Heart left ventricle (tissue), 16 donors: ENCODE measurements at regions of chr5 and their contacts with region 1.

Region 1: DNA sequence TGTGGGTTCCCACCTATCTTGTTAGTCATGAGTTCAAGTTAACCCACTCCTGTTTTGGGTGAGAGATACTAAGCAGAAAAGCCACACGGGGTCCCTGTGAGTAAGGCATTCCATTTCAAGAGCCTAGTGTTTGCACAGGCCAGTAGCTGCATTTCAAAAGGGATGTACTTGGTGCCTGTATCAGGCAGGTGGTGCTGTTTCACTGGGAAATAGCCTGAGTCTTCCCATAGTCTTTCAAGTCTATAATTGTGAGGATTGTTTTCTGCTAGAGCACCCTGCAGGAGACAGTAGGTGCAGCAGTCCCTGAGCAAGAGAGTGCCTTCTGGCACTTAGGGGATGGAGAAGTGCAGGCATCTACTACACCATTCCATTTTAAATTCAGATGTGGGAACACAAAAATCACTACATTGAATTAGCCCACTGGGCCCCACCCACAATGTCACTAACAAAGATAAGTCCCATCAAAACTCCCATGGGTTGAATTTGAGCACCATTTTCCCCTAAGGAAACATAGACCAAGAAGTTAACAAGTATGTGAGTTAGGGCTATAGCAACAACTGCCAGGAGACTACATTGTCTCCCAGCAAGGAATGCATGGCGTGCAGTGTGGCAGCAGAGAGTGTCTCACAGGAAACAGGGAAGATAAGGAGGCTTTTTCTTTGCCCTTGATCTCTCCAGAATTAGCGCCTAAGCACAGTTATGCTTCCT is 263.2 kb downstream of the COX7C start:
- DNase-seq: peak in 2 of 5 donors; percentile 31 to 32
- ATAC-seq: peak; percentile 61 to 97 (median 96)
- H3K4me3 ChIP-seq: no peak overlapping the region
- H3K27ac ChIP-seq: peak overlapping the region in 2 of 12 donors; percentile 18 to 35
- H3K4me1 ChIP-seq: peaks cover 0 to 10% (median 0%) of the 10 kb centered on the region in 12 donors
- H3K27me3 ChIP-seq: no peaks in the 10 kb centered on the region
- CTCF ChIP-seq: peak; percentile 21 to 74 (median 54)
- POLR2A ChIP-seq: no peak

Region 2: GRCh38 chr5:86968301-86968753 is 87.4 kb after region 1 on chr5:
- intact Hi-C with region 1: loop called in 9 of 10 experiments (anchors 2 to 10 kb)
- DNase-seq: peak; percentile 38 to 61 (median 53)
- ATAC-seq: peak in 2 of 4 donors; percentile 74 to 91
- H3K4me3 ChIP-seq: no peak overlapping the region
- H3K27ac ChIP-seq: peak overlapping the region in 5 of 12 donors; percentile 27 to 52 (median 30)
- H3K4me1 ChIP-seq: peaks cover 0 to 12% (median 0%) of the 10 kb centered on the region in 12 donors
- H3K27me3 ChIP-seq: no peaks in the 10 kb centered on the region
- CTCF ChIP-seq: peak in 11 of 12 donors; percentile 17 to 62 (median 37)
- POLR2A ChIP-seq: no peak

Region 3: DNA sequence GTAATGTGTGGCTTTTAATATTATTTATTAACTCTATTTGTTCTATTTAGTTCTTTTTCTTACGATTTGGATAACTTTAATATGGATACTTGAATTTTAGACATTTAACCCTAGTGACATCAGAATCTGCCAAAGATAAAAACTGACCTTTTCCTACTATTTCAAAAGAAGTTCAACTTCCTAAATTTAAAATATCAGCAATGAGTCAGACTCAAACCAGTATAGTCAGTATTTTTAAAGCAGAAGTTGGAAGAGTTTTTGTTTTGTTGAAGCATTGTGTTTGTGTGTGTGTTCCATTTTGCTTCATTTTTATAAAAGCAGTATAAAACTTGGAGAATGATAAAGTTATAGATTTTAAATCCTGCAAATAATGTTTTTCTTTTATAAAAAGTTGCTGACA is 135.0 kb after region 1 on chr5:
- intact Hi-C with region 1: loop called in 1 of 10 experiments (anchors 10 kb)
- DNase-seq: no peak
- ATAC-seq: no peak
- H3K4me3 ChIP-seq: no peak overlapping the region
- H3K27ac ChIP-seq: peak overlapping the region in 1 of 12 donors; percentile 69
- H3K4me1 ChIP-seq: peaks cover 0 to 23% (median 8%) of the 10 kb centered on the region in 12 donors
- H3K27me3 ChIP-seq: no peaks in the 10 kb centered on the region
- CTCF ChIP-seq: no peak
- POLR2A ChIP-seq: no peak

Region 4: DNA sequence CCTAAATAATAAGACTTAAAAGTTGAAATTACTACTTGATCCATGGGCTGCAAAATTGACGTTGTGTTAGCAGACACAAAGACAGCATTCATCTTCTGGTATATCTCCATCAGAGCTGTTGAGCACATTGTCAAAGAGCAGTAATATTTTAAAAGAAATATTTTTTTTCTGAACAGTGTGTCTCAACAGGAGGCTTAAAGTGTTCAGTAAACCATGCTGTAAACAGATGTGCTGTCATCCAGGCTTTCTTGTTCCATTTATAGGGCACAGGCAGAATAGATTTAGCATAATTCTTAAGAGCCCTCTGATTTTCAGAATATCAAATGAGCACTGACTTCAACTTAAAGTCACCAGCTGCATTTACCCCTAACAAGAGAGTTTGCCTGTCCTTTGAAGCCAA is 561.5 kb after region 1 on chr5:
- intact Hi-C with region 1: no loop called
- DNase-seq: no peak
- ATAC-seq: no peak
- H3K4me3 ChIP-seq: no peak overlapping the region
- H3K27ac ChIP-seq: no peak overlapping the region
- H3K4me1 ChIP-seq: no peaks in the 10 kb centered on the region
- H3K27me3 ChIP-seq: no peaks in the 10 kb centered on the region
- CTCF ChIP-seq: no peak
- POLR2A ChIP-seq: no peak